ENCODE measurements at regions of chr7 and their contacts with region 1.

Region 1: GRCh38 chr7:74206589-74207120 is 3.2 kb upstream of the LAT2 start:
- DNase-seq: peak; percentile 21
- H3K4me3 ChIP-seq: 0 out of 2 replicates have a peak overlapping the region, but pooled peaks have one; percentile 25
- H3K27ac ChIP-seq: no peak overlapping the region
- H3K27me3 ChIP-seq: no peaks in the 10 kb centered on the region
- CTCF ChIP-seq: peak; percentile 92

Region 2: GRCh38 chr7:74104703-74105102 is 102.0 kb before region 1 on chr7:
- CTCF ChIA-PET with region 1: no interaction called
- POLR2A ChIA-PET with region 1: no interaction called
- DNase-seq: no peak
- H3K4me3 ChIP-seq: no peak overlapping the region
- H3K27ac ChIP-seq: no peak overlapping the region
- H3K27me3 ChIP-seq: no peaks in the 10 kb centered on the region
- CTCF ChIP-seq: no peak

Region 3: DNA sequence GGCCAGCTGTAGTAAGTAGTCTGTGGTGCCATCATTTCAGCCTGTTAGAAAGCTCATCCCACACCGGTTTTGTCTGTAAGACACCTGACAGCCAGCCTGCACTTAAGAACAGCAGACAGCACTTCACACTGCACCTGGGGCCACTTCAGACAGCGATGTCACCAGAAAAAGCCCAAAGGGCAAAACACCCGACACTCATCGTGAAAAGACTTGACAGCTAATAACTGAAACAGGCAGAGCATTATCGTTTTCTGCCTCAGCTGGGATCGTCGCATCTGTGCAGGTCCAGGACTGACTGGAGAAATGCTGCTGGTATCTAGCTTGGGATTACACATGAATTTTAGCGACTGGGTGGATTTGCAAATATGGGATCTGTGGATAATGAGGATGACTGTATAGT is 13.6 kb before region 1 on chr7:
- CTCF ChIA-PET with region 1: interaction called, 26 read pairs
- POLR2A ChIA-PET with region 1: no interaction called
- DNase-seq: no peak
- H3K4me3 ChIP-seq: no peak overlapping the region
- H3K27ac ChIP-seq: no peak overlapping the region
- H3K27me3 ChIP-seq: no peaks in the 10 kb centered on the region
- CTCF ChIP-seq: no peak

Region 4: DNA sequence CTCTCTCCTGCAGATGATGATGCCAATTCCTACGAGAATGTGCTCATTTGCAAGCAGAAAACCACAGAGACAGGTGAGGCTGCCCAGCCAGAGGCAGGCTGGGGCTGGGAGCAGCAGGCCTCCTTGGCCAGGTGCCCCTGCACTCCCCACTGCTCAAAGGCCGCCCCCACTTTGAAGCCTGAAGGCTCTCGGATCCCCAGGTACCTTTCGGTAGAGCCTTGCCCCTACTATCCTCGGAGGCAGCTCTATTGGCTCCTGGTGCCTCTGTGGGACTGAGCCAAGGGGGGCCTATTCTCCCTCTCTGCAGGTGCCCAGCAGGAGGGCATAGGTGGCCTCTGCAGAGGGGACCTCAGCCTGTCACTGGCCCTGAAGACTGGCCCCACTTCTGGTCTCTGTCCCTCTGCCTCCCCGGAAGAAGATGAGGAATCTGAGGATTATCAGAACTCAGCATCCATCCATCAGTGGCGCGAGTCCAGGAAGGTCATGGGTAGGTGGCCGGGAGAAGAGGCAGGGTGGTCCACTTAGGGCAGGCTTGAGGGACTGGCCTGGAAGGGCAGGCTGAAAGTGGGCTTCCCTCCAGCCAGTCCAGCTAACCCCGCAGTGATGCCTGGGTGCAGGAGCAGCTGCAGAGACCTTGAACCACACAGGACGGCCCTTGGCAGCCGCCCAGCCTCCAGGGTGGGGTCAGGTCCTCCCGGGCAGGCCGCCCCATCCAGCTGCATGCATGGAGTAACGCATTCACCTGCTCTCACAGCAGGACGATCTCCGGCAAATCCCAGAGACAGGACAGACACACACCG is 17.3 kb after region 1 on chr7:
- CTCF ChIA-PET with region 1: interaction called, 12 read pairs
- POLR2A ChIA-PET with region 1: no interaction called
- DNase-seq: no peak
- H3K4me3 ChIP-seq: no peak overlapping the region
- H3K27ac ChIP-seq: peak overlapping the region; percentile 21
- H3K27me3 ChIP-seq: no peaks in the 10 kb centered on the region
- CTCF ChIP-seq: no peak

Region 5: DNA sequence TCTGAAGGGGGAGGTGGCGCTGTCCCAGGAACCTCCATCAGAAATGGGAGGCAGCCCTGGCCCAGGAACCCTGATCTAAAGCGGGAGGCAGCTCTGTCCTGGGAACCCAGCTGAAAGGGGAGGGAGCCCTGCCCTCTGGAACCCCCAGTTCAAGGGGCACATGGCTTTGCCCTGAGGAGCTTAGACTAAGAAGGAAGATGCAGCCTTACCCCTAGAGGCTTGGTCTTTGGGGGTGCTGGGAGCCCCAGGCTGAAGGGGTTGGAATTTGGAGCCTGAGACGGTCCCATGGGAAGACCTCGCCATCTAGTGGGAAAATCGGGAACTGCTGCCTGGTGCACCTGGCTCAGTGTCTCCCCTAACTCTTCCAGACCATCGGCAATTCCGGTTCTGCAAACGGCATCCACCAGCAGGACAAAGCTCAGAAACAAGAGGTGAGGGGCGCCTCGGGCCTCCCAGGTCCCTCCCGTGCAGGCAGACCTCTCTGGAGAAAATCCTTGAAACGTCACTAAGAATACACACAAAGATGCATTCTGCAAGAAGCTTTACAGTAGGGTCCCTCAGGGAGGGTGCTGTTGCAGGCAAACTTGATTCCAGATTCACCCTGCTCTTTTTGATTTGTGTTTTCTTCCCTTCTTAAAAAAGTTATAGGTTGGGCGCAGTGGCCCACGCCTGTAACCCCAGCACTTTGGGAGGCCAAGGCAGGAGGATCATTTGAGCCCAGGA is 194.6 kb after region 1 on chr7:
- CTCF ChIA-PET with region 1: interaction called, 168 read pairs
- POLR2A ChIA-PET with region 1: interaction called, 4 read pairs
- DNase-seq: no peak
- H3K4me3 ChIP-seq: no peak overlapping the region
- H3K27ac ChIP-seq: no peak overlapping the region
- H3K27me3 ChIP-seq: no peaks in the 10 kb centered on the region
- CTCF ChIP-seq: peak; percentile 98